GM12878 (cell line): ENCODE measurements at regions of chr4 and their contacts with region 1.

Region 1: GRCh38 chr4:31768756-31769155 is 1048.6 kb downstream of the PCDH7 start:
- DNase-seq: no peak
- ATAC-seq: no peak
- H3K4me3 ChIP-seq: no peak overlapping the region
- H3K27ac ChIP-seq: no peak overlapping the region
- H3K4me1 ChIP-seq: no peaks in the 10 kb centered on the region
- H3K27me3 ChIP-seq: no peaks in the 10 kb centered on the region
- CTCF ChIP-seq: no peak
- EP300 ChIP-seq: no peak
- POLR2A ChIP-seq: no peak
- RAD21 ChIP-seq: no peak

Region 2: DNA sequence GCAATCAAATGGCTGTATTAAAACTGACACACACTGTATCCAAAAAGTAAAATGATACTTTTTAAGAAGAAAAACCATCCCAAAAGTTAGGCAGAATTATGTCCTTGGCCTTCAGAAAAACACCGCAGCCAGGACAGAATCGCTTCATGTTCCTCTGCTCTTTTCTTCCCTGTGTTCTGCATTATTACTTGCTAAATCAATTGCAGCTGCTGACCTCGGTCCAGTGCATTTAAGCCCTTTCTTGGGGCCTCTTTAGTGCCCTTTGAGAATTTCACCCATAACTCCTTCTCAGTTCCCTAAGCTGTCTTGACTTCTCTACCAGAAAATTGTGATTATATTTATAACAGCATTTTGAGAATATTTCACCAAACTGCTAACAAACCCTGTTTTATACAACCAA is 351.7 kb before region 1 on chr4:
- CTCF ChIA-PET with region 1: no interaction called
- POLR2A ChIA-PET with region 1: interaction called, 10 read pairs
- RAD21 ChIA-PET with region 1: no interaction called
- SMC1A ChIA-PET with region 1: no interaction called
- in situ Hi-C with region 1: no loop called
- intact Hi-C with region 1: no loop called
- DNase-seq: no peak
- ATAC-seq: no peak
- H3K4me3 ChIP-seq: no peak overlapping the region
- H3K27ac ChIP-seq: no peak overlapping the region
- H3K4me1 ChIP-seq: no peaks in the 10 kb centered on the region
- H3K27me3 ChIP-seq: no peaks in the 10 kb centered on the region
- CTCF ChIP-seq: no peak
- EP300 ChIP-seq: no peak
- POLR2A ChIP-seq: no peak
- RAD21 ChIP-seq: no peak